Right ventricle myocardium superior (tissue), 1 donor: ENCODE measurements at regions of chr14 and their contacts with region 1.

Region 1: GRCh38 chr14:94001501-94002396 is 4.6 kb downstream of the CCDC197 start:
- DNase-seq: peak; percentile 64
- ATAC-seq: peak; percentile 84

Region 2: GRCh38 chr14:93857500-93858283 is 144.1 kb before region 1 on chr14:
- intact Hi-C with region 1: no loop called
- DNase-seq: no peak
- ATAC-seq: peak; percentile 15

Region 3: GRCh38 chr14:93939304-93940229 is 62.2 kb before region 1 on chr14:
- intact Hi-C with region 1: loop called (anchors 2 kb)
- DNase-seq: peak; percentile 86
- ATAC-seq: peak; percentile 66

Region 4: GRCh38 chr14:94173885-94174603 is 172.3 kb after region 1 on chr14 and contains the start of gene PPP4R4:
- intact Hi-C with region 1: no loop called
- DNase-seq: peak; percentile 89
- ATAC-seq: peak; percentile 92
- total RNA-seq, gene PPP4R4: not detected